ENCODE measurements at regions of chr21 and their contacts with region 1.

Region 1: DNA sequence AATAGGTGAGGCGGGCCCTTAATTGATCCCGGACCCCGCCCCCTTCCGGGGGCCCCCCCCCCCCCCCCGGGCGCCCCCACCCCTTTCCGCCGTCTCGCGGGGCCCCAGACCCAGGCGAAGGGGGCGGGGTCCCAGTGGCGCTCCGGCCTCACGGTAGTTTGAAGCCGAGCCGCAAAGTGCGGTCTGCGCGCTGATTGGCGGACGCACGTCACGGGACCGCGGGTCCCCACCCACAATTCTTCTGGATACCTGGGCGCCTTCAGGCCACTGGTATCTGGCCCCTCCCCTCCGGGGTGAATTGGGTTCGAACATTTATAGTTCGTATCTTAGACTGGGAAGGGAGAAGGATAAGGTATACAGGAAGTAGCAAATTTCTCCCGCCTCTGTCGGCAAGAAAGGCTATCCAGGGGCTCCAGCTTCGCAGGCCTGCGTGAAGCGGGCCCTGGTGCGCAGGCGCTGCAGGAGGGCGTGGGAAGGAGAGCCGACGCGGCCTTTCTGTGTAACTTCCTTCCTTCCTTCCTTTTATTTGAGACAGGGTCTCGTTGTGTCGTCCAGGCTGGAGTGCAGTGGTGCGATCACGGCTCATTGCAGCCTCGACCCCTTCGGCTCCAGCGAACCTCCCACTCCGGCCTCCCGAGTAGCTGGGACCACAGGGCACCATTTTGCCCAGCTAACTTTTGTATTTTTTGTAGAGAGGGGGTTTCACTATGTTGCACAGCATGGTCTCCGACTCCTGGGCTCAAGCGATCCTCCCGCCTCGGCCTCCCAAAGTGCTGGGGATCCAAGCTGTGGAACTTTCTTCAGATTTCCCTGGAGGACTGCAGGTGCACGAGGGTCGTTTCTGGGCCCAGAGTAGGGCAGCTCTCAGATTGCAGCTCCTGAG is 564 bp upstream of the HMGN1 start:
- DNase-seq: peak; percentile 84 to 97
- H3K4me3 ChIP-seq: peak overlapping the region; percentile 57 to 81 (median 68)
- H3K27ac ChIP-seq: peak overlapping the region; percentile 81
- H3K4me1 ChIP-seq: peaks cover 3 to 15% (median 9%) of the 10 kb centered on the region in 4 experiments; a peak in 6 of 7 replicates
- H3K27me3 ChIP-seq: no peaks in the 10 kb centered on the region
- CTCF ChIP-seq: no peak
- EP300 ChIP-seq: no peak
- POLR2A ChIP-seq: no peak; a peak in 2 of 3 replicates
- RAD21 ChIP-seq: no peak

Region 2: GRCh38 chr21:39313571-39314142 is 35.8 kb before region 1 on chr21 and contains the start of gene BRWD1:
- CTCF ChIA-PET with region 1: interaction called, 8 read pairs
- POLR2A ChIA-PET with region 1: interaction called, 89 read pairs
- DNase-seq: peak; percentile 51 to 88
- H3K4me3 ChIP-seq: peak within 1 kb of the TSS; percentile 63 to 80 (median 69)
- H3K27ac ChIP-seq: peak within 1 kb of the TSS; percentile 98
- H3K4me1 ChIP-seq: peaks cover 4 to 5% (median 4%) of the 10 kb centered on the region in 4 experiments; a peak in 5 of 7 replicates
- H3K27me3 ChIP-seq: no peaks in the 10 kb centered on the region
- CTCF ChIP-seq: peak in 1 of 3 experiments; percentile 26; a peak in 2 of 4 replicates
- EP300 ChIP-seq: no peak
- POLR2A ChIP-seq: peak; percentile 91 to 93
- RAD21 ChIP-seq: no peak; a peak in 1 of 4 replicates
- total RNA-seq, gene BRWD1: 45.2 and 47.3 TPM in 2 replicates

Region 3: DNA sequence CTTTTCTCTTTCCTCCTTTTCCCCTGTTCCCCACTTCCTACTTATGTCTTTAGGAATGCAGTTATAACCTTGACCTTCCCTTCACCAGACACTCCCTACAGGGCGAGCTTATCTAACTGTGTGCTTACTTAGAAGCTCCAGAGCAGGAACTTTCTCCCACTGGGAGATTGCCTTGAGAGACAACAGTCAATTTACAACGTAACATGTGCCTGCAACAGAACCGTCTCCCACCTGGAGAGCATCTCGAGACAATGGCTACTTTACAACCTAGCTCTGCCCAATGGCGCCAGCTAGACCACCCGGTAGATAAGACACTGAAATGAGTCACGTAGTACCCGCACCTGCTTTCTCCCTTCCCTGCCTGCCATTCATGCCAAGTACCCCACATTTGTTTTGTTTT is 17.3 kb before region 1 on chr21:
- CTCF ChIA-PET with region 1: interaction called, 3 read pairs
- POLR2A ChIA-PET with region 1: interaction called, 80 read pairs
- DNase-seq: no peak
- H3K4me3 ChIP-seq: no peak overlapping the region
- H3K27ac ChIP-seq: no peak overlapping the region
- H3K4me1 ChIP-seq: no peaks in the 10 kb centered on the region; a peak in 1 of 7 replicates
- H3K27me3 ChIP-seq: no peaks in the 10 kb centered on the region
- CTCF ChIP-seq: no peak
- EP300 ChIP-seq: no peak
- POLR2A ChIP-seq: no peak
- RAD21 ChIP-seq: no peak

Region 4: DNA sequence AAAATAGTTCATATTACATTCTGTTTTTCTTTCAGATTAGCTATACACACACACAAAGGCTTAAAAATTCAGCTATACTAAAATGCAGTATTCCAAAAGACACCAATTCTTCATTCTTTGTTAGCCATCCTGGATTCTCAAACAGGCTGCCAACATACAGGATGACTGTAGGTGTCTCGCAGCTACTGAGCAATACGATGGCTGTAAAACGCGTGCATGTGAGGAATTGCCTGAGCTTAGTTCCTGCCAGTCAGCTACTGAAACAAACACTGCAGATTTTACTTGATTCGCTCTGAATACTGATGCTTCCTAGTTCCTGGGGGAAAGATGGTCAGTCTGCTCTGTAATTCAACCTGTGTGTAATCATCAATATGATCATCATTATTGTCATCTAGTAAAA is 24.2 kb after region 1 on chr21:
- CTCF ChIA-PET with region 1: interaction called, 3 read pairs
- POLR2A ChIA-PET with region 1: interaction called, 10 read pairs
- DNase-seq: no peak
- H3K4me3 ChIP-seq: no peak overlapping the region
- H3K27ac ChIP-seq: no peak overlapping the region
- H3K4me1 ChIP-seq: peaks cover 0 to 5% (median 3%) of the 10 kb centered on the region in 4 experiments; a peak in 3 of 7 replicates
- H3K27me3 ChIP-seq: no peaks in the 10 kb centered on the region
- CTCF ChIP-seq: peak in 2 of 3 experiments; percentile 20 to 49; a peak in 3 of 4 replicates
- EP300 ChIP-seq: no peak
- POLR2A ChIP-seq: no peak
- RAD21 ChIP-seq: peak; percentile 43 to 57

Region 5: DNA sequence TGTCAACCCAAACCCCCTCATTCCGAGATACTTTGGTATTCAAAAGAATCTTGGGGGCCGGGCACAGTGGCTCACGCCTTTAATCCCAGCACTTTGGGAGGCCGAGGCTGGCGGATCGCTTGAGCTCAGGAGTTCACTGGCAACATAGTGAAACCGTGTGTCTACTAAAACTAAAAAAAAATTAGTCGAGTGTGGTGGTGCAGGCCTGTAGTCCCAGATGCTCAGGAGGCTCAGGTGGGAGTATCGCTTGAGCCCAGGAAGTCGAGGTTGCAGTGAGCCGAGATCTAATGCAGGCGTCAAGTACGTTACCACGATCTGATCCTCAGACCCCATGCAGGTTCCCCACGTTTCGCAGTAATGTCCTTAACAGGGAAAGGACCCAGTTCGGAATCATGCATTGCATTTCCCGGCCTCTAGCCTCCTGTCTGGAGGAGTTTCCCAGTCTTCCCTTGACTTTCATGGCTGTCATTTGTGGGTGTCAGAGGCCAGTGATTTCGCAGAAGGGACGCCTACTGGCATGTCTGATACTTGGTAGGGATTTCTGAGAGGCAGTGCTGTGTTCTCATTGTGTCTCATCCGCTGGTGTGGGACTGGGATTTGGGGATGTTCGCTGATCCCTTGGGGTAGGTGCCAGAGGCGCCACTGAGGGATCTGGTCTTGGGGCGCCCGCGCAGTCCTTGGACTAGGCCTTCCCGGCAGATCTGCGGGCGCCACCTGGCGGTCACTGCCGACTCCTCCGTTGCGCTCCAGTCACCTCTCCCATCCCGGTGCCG is 38.8 kb after region 1 on chr21:
- CTCF ChIA-PET with region 1: interaction called, 4 read pairs
- POLR2A ChIA-PET with region 1: interaction called, 40 read pairs
- DNase-seq: peak; percentile 79 to 99
- H3K4me3 ChIP-seq: peak overlapping the region; percentile 4 to 55 (median 38); a peak in 6 of 8 replicates
- H3K27ac ChIP-seq: no peak overlapping the region
- H3K4me1 ChIP-seq: peaks cover 0 to 2% (median 0%) of the 10 kb centered on the region in 4 experiments; a peak in 1 of 7 replicates
- H3K27me3 ChIP-seq: no peaks in the 10 kb centered on the region
- CTCF ChIP-seq: peak; percentile 91 to 94 (median 92)
- EP300 ChIP-seq: no peak
- POLR2A ChIP-seq: no peak
- RAD21 ChIP-seq: peak; percentile 87 to 92

Region 6: DNA sequence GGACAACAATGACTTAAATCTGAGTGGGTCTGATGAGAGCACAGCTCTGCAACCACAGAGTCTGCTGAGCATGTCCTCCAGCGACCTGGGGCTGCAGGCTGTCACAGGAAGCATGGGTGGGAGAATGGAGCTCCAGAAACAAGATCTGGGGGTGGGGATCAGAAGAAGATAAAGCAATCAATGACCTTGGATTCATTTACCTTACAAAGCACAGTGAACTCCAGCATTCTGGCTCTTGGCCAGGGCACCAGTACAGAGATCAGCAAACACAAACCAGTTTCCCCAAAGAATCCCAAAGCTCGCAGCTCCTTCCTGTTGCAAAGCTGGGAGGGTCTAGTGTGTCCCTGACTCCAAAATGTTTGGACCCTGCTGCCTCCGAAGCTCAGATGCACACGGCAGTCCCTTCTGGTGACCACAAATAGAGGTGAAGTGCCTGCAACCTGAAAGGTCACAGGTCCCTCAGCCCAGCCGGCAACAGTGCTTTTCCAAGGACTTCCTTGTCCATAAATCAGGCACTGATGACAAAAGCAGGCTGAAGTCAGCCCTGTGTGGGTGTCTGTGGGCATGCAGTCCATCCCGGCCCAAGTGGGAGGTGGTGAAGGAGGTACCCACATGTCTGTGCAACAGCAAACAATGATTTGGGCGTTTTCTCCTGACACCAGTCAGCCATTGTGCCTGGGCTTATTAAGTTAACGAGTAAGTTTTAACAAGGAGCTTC is 178.4 kb after region 1 on chr21:
- CTCF ChIA-PET with region 1: no interaction called
- POLR2A ChIA-PET with region 1: no interaction called
- DNase-seq: no peak
- H3K4me3 ChIP-seq: no peak overlapping the region
- H3K27ac ChIP-seq: no peak overlapping the region
- H3K4me1 ChIP-seq: peaks cover 0 to 3% (median 0%) of the 10 kb centered on the region in 4 experiments; a peak in 1 of 7 replicates
- H3K27me3 ChIP-seq: no peaks in the 10 kb centered on the region; a peak in 1 of 7 replicates
- CTCF ChIP-seq: no peak
- EP300 ChIP-seq: no peak
- POLR2A ChIP-seq: no peak
- RAD21 ChIP-seq: no peak

Measured in H1 (cell line).